Activated CD4-positive, alpha-beta T cell treated with anti-CD3 and anti-CD28 coated beads for 36 hours (primary cell): ENCODE measurements at regions of chr18 and their contacts with region 1.

Region 1: GRCh38 chr18:79644006-79644665 is 35.5 kb upstream of the CTDP1 start:
- DNase-seq: peak; percentile 86
- ATAC-seq: peak; percentile 90
- H3K4me3 Mint-ChIP-seq: no peak overlapping the region
- H3K27ac Mint-ChIP-seq: no peak overlapping the region
- H3K4me1 Mint-ChIP-seq: peaks cover 6% of the 10 kb centered on the region
- H3K27me3 Mint-ChIP-seq: peaks cover 9% of the 10 kb centered on the region

Region 2: GRCh38 chr18:78875268-78875997 is 768.7 kb before region 1 on chr18:
- CTCF ChIA-PET with region 1: no interaction called
- POLR2A ChIA-PET with region 1: no interaction called
- intact Hi-C with region 1: loop called in 1 of 2 experiments (anchors 10 kb)
- DNase-seq: peak; percentile 65
- ATAC-seq: peak; percentile 39
- H3K4me3 Mint-ChIP-seq: no peak overlapping the region
- H3K27ac Mint-ChIP-seq: no peak overlapping the region
- H3K4me1 Mint-ChIP-seq: no peaks in the 10 kb centered on the region
- H3K27me3 Mint-ChIP-seq: peaks cover 12% of the 10 kb centered on the region

Region 3: DNA sequence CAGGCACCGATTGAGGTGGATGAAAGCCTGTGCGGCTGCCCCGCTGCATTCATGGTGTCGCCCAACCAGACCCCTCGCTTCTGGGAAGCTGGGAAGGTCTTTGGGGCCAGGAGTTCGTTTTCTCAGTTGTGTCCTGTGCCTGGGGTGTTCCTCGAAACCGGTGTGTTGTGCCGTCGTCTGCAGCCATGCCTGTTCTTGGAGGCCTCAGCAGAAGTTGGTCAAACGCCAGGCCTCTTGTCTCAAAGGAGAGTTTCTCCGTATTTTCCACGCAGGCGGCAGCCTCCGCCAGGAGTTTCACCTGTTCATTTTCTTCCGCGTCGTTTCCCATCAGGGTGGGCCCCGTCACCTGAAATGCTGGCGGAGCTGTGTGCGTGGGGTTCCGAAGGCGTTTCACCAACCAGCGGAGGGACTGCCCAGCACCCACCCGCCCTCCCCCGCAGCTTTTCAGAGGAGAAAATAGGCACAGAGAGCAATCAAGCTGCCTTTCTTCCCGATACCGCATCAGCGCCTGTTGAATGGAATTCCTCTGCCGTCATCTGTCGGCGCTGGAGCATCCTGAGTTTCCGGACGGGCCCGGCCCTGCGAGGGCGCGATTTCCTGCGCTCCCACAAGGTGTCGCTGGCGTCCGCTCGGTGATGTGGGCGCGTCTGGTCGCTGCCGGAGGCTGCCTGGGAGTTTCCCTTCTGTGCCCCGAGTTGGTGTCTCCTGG is 265.4 kb before region 1 on chr18:
- CTCF ChIA-PET with region 1: interaction called, 23 read pairs
- POLR2A ChIA-PET with region 1: no interaction called
- intact Hi-C with region 1: loop called (anchors 1 kb)
- DNase-seq: peak; percentile 92
- ATAC-seq: peak; percentile 93
- H3K4me3 Mint-ChIP-seq: no peak overlapping the region
- H3K27ac Mint-ChIP-seq: peak overlapping the region; percentile 58
- H3K4me1 Mint-ChIP-seq: peaks cover 10% of the 10 kb centered on the region
- H3K27me3 Mint-ChIP-seq: no peaks in the 10 kb centered on the region

Region 4: DNA sequence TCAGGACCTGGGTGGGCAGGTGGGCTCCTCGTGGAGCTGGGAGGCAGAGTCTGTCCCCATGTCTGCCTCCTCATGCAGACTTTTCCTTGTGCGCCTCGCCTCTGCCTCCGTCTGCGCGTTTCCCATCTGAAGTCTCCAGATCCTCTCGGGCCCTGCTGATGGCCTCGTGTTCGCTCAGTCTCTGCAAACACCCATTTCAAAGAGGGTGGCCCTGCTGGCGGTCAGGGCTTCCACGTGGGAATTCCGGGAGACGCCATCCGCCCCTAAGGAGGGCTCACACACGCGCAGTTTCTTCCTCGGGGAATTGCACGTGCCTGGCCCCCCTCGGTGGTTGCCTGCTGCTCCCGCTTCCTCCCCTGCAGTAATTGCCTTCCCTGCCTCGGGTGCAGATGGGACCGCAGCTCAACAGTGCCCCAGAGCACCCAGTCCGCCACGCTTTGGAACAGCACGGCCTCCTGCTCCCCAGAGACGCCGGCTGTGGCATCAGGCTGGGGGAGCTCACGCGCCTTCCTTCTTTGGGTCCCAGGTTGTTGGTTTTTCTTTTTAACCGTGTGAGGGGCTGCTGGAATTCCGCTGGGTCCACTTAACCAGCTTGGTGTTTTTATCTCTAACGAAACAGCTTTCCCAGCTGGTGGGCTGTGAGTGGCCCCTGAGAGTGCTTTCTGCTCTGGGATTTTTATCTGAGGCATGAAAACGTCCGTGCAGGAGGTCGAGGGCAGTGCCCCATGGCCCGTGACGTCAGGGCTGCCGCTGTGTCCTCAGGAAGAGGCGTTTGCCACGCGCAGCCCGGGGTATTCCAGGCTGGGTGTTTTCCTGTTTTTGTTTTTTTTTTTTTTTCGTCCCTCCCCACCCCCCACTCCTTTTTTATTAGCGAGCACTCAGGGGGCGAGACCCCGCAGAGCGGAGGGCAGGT is 232.3 kb before region 1 on chr18:
- CTCF ChIA-PET with region 1: no interaction called
- POLR2A ChIA-PET with region 1: no interaction called
- intact Hi-C with region 1: no loop called
- DNase-seq: peak; percentile 2
- ATAC-seq: no peak
- H3K4me3 Mint-ChIP-seq: no peak overlapping the region
- H3K27ac Mint-ChIP-seq: no peak overlapping the region
- H3K4me1 Mint-ChIP-seq: peaks cover 26% of the 10 kb centered on the region
- H3K27me3 Mint-ChIP-seq: no peaks in the 10 kb centered on the region

Region 5: GRCh38 chr18:79422022-79422782 is 221.9 kb before region 1 on chr18:
- CTCF ChIA-PET with region 1: no interaction called
- POLR2A ChIA-PET with region 1: no interaction called
- intact Hi-C with region 1: no loop called
- DNase-seq: no peak
- ATAC-seq: no peak
- H3K4me3 Mint-ChIP-seq: no peak overlapping the region
- H3K27ac Mint-ChIP-seq: peak overlapping the region; percentile 25
- H3K4me1 Mint-ChIP-seq: peaks cover 30% of the 10 kb centered on the region
- H3K27me3 Mint-ChIP-seq: no peaks in the 10 kb centered on the region

Region 6: DNA sequence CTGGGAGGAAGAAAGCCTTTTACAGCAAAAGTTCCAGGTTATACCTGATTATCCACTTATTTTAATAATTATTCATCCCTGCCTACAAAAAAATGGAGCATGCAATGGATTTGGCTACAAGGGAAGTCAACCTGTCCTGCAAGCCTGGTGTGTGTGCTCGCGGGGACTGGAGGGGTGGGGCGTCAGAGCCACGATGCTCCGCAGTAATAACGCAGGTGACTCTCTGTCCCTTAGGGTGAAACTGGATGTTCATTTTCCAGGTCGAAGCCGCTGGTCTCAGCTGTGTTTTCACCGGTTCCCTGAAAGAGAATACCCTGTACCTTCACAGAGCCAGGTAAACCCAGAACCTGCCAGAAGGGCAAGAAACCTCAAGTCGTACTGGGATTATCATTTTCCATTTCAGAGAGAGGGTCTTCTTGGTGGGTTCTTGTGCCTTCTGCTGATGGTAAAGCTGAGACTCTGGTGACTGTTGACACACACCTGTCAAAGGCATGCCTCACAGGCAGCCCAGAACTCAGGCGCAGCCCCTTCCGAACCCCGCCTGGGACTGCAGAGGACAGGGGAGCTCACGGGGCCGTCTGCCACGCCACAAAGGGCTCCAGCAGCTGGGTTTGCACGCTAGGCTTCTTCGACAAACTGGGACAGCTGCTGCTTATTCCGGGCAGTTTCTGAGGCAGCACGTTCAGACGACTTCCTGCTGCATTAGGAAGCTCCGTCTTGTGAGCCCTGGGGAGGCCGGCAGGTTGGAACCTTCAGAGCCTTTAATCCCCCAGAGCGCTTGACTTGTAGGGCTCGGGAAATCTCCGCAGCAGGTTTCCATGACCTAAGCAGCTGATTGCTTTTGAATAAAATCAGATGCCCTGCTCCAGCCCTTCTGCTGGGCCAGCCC is 212.2 kb after region 1 on chr18:
- CTCF ChIA-PET with region 1: no interaction called
- POLR2A ChIA-PET with region 1: no interaction called
- intact Hi-C with region 1: no loop called
- DNase-seq: peak; percentile 45
- ATAC-seq: peak; percentile 53
- H3K4me3 Mint-ChIP-seq: no peak overlapping the region
- H3K27ac Mint-ChIP-seq: no peak overlapping the region
- H3K4me1 Mint-ChIP-seq: peaks cover 3% of the 10 kb centered on the region
- H3K27me3 Mint-ChIP-seq: peaks cover 8% of the 10 kb centered on the region